Lower leg skin (tissue), 4 donors: ENCODE measurements at regions of chrX and their contacts with region 1.

Region 1: DNA sequence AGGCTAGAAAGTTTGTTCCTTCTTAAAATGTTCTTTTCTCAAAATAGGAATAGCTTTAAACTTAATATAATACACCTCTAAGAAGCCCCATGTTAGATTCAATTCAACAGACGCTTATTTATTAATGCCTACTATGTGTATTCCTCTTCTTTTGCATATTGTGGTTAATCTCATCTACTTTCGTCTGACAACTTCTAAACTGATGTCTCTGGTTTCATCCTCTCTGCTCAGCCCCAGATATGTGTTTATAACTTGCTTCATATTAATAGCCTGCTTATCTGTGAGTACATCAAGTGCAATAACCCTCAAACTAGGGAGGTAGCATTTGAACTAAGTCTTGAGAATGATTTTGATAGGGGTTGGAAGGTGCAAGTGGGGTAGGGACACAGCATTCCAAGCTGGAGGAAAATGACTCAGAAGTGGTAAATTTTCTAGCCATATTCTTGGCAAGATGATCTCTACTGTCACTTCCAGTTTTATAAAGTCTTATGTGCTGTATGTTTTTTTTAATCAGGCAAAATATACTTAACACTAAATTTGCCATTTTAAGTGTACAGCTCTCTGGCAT is 37.0 kb downstream of the STK26 start:
- DNase-seq: no peak
- H3K4me3 ChIP-seq: no peak overlapping the region
- CTCF ChIP-seq: no peak
- POLR2A ChIP-seq: no peak

Region 2: DNA sequence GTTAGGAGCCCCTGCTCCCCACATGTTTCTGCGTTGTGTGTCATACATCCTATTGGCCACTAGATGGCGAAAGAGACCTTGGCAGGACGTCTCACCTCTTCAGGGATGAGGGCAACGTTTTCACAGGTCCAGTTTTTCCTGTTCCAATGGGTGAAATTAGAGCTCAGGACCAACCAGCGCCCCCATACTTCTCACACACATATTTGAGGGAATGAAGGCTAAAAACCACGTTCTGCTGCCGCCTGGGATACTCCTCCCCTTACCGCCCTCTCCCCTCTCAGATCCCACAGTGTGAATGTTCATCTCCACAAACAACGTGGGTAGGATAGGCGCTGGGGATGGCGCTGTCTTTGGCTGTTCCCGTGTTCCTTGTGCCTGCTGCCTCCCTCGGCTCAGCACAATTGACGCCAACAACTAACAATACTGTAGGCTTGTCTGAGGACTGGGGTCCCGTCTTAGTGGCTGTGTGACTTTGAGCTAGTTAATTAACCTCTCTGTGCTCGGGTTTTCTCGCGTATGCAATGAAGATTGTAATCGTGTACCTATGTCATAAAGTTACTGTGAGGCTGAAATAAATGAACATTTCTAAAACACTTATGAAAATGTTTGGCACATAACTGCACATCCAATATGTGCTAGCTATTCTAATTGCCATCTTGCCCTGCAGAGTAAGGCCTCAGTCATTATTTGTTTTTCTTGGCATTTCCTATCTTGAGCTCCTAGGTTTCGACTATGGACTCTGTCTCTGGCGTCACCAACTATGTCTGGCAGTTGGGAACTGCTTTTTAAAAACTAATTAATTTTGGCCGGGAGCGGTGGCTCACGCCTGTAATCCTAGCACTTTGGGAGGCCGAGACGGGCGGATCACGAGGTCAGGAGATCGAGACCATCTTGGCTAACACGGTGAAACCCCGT is 218.3 kb before region 1 on chrX:
- intact Hi-C with region 1: loop called (anchors 10 kb)
- DNase-seq: no peak
- H3K4me3 ChIP-seq: no peak overlapping the region
- CTCF ChIP-seq: no peak
- POLR2A ChIP-seq: no peak

Region 3: GRCh38 chrX:132119821-132120515 is 59.9 kb after region 1 on chrX:
- intact Hi-C with region 1: no loop called
- DNase-seq: peak; percentile 13 to 69
- H3K4me3 ChIP-seq: no peak overlapping the region
- CTCF ChIP-seq: no peak
- POLR2A ChIP-seq: no peak